ENCODE measurements at regions of chr1 and their contacts with region 1.

Region 1: GRCh38 chr1:53442299-53442698 is 16.9 kb upstream of the DMRTB1 start:
- DNase-seq: no peak
- H3K4me3 ChIP-seq: no peak overlapping the region
- H3K27ac ChIP-seq: no peak overlapping the region
- H3K4me1 ChIP-seq: no peaks in the 10 kb centered on the region; a peak in 1 of 4 replicates
- H3K27me3 ChIP-seq: no peaks in the 10 kb centered on the region
- CTCF ChIP-seq: no peak
- EP300 ChIP-seq: no peak
- RAD21 ChIP-seq: no peak

Region 2: GRCh38 chr1:53470155-53470554 is 27.9 kb after region 1 on chr1:
- CTCF ChIA-PET with region 1: interaction called, 11 read pairs
- POLR2A ChIA-PET with region 1: no interaction called
- DNase-seq: no peak
- H3K4me3 ChIP-seq: peak overlapping the region in 1 of 2 experiments; percentile 46; a peak in 1 of 4 replicates
- H3K27ac ChIP-seq: no peak overlapping the region
- H3K4me1 ChIP-seq: peaks cover 0 to 7% of the 10 kb centered on the region in 2 experiments; a peak in 1 of 4 replicates
- H3K27me3 ChIP-seq: no peaks in the 10 kb centered on the region; the same call in 1 of the 2 replicates
- CTCF ChIP-seq: no peak
- EP300 ChIP-seq: no peak
- RAD21 ChIP-seq: no peak

Measured in SK-N-SH (cell line).